PC-9 (cell line): ENCODE measurements at regions of chr2 and their contacts with region 1.

Region 1: DNA sequence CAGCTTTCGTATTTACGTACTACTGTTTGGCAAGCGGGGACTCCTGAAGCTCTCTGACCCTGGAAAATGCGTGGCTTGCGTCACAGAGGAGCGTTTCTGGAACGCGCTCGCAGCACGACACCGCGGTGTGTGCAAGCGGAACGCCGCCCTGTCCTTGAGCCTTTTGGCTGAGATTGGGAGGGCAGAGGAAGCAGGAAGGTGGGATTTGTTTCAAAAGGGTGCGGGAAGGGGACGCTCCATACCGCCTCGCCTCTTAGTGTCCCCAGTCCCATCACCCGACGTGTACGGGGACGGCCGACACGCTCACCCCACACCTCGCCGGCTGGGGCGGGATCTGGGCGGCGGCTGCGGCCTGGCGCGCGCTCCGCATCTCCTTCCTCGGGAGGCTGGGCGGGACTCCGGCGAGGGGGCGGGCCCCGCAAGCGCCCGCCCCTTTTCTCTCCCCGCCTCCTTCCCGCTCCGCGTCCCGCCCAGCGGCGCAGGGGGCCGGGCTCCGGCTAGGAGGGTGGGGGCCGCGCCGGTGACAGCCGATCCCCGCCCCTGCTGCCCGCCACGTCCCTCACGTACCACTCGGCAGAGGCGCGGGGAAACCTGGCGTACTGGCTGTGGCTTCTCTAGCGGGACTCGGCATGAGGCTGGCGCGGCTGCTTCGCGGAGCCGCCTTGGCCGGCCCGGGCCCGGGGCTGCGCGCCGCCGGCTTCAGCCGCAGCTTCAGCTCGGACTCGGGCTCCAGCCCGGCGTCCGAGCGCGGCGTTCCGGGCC is at the start of gene PDK1:
- DNase-seq: peak; percentile 87 to 99
- H3K4me3 ChIP-seq: peak within 1 kb of the TSS; percentile 75
- H3K27ac ChIP-seq: peak within 1 kb of the TSS; percentile 65
- H3K4me1 ChIP-seq: peaks cover 58% of the 10 kb centered on the region
- H3K27me3 ChIP-seq: no peaks in the 10 kb centered on the region
- CTCF ChIP-seq: no peak
- total RNA-seq, gene PDK1: 15.9 and 18.5 TPM in 2 replicates

Region 2: DNA sequence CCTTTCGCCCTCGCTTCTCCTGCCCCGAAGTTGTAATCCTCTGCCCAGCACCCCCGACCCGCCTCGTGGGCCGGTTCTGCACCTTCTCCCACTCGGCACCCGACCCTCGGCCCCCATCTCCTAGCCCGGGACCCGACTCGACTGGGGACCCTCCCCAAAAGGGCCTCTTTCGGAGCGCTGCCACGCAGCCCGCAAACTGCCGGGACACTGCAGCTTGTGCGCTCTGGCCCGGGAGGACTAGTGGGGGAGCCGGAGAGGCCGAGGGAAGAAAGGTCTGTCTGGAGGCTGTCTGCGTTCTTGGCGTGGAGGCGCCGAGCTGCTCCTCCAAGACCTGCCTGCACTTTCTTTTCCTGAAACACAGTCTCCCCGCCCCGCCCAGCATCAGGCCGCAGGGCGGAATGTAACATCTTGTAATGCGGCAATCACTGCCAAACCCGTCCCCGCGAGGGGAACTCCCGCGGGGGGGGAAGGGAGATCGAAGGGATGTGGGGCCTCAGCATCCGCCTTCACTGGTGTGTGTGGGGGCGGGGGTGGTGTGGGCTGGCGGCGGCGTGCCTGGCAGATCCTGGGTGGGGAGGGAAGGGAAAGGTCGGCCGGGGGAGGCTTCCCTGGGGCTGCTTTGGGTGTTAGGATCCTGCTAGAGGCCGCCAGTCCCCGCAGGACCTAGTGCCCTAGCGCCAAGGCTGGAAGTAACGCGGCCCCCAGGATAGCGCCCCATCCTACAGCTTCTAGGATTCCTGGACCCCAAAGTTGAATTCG is 460.4 kb before region 1 on chr2:
- CTCF ChIA-PET with region 1: interaction called, 3 read pairs
- POLR2A ChIA-PET with region 1: no interaction called
- intact Hi-C with region 1: loop called (anchors 2 kb)
- DNase-seq: peak; percentile 88 to 94
- H3K4me3 ChIP-seq: peak overlapping the region; percentile 73
- H3K27ac ChIP-seq: peak overlapping the region; percentile 12
- H3K4me1 ChIP-seq: peaks cover 45% of the 10 kb centered on the region
- H3K27me3 ChIP-seq: no peaks in the 10 kb centered on the region
- CTCF ChIP-seq: no peak

Region 3: DNA sequence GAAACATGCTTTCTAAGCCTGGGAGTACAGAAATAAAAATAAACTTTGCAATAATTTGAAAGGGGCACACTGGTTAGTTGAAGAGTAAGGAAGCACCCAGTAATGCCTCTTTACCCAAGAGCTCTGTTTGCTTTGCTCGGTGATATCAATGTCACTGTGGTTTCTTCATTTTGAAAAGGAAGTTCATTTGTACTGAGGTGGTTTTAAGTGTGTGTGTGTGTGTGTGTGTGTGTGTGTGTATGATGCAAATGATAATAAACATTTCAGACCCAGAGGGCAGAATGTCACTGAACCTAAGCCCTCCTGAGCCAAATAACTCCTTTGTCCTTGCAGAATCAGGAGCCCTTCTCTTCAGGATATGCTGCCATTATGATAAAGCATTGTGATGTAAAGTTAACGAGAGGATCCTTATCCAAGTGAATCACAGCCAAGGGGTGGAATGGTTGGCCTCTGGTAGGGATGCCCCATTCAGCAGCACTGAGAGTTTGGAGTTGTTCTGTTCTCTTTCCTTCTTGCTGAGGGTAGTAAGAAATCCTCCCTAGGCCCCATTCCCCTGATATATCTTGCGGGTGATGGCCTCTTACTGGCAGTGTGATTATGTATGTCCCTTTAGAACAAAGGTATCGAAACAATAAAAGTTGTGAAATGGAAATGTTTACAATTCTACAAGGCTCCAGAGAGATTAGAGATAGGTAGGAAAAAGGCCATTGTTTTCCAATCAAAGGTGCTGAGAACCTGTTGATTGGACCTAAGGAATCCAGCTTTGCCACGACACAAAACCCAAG is 120.7 kb before region 1 on chr2:
- CTCF ChIA-PET with region 1: no interaction called
- POLR2A ChIA-PET with region 1: no interaction called
- intact Hi-C with region 1: loop called (anchors 5 kb)
- DNase-seq: peak in 1 of 2 experiments; percentile 64
- H3K4me3 ChIP-seq: no peak overlapping the region
- H3K27ac ChIP-seq: peak overlapping the region; percentile 81; the same call in 1 of the 2 replicates
- H3K4me1 ChIP-seq: peaks cover 93% of the 10 kb centered on the region
- H3K27me3 ChIP-seq: no peaks in the 10 kb centered on the region
- CTCF ChIP-seq: no peak

Region 4: GRCh38 chr2:172698041-172698863 is 142.5 kb after region 1 on chr2:
- CTCF ChIA-PET with region 1: no interaction called
- POLR2A ChIA-PET with region 1: no interaction called
- intact Hi-C with region 1: loop called (anchors 2 kb)
- DNase-seq: peak; percentile 47 to 88
- H3K4me3 ChIP-seq: no peak overlapping the region
- H3K27ac ChIP-seq: peak overlapping the region; percentile 37
- H3K4me1 ChIP-seq: peaks cover 43% of the 10 kb centered on the region
- H3K27me3 ChIP-seq: no peaks in the 10 kb centered on the region
- CTCF ChIP-seq: no peak

Region 5: DNA sequence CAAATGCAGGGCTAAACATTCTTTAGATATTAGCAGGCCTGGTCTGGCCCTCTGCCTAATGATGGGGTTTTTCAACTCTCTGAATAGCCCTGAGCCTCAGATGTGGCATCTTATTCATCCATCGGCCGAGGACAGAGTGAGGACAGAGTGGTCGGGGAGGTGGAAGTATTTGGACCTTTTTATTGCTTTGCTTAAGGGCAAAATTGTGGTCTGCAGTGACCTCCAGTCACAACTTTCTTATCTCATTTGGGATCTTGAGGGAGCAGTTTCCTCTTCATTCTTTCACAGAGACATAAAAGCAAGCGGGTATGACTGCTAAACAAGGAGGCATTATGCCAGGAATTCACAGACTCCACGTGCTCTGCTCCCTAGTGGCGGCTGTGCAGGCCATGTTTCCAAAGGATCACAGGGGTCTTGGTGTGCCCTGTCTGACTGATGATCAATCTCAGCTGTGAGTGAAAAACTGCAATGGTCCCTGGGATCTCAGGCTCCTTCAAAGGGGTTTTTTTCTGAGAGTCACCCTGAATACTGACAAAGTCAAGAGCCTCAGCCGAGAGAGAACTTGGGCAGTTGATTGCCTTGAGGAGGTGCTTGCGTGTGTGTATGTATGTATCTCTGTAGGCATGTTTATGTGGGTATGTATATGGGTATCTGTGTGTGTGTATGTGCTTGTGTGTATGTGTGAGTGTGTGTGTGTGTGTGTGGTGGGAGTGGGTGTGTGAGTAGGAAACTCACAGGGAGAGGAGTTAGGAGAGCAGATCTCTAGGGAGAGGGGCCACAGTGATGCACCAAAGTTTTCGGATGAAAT is 227.6 kb after region 1 on chr2:
- CTCF ChIA-PET with region 1: no interaction called
- POLR2A ChIA-PET with region 1: no interaction called
- intact Hi-C with region 1: loop called (anchors 2 kb)
- DNase-seq: peak; percentile 95 to 100
- H3K4me3 ChIP-seq: no peak overlapping the region
- H3K27ac ChIP-seq: peak overlapping the region; percentile 72
- H3K4me1 ChIP-seq: peaks cover 33% of the 10 kb centered on the region
- H3K27me3 ChIP-seq: no peaks in the 10 kb centered on the region
- CTCF ChIP-seq: no peak; the same call in 1 of the 2 replicates